HepG2 (cell line): ENCODE measurements at regions of chr11 and their contacts with region 1.

Region 1: GRCh38 chr11:102495161-102496042 is 35.1 kb downstream of the MMP7 start:
- DNase-seq: peak; percentile 86
- ATAC-seq: peak; percentile 81
- H3K4me3 ChIP-seq: peak overlapping the region in 2 of 3 experiments; percentile 6 to 38; a peak in 3 of 6 replicates
- H3K27ac ChIP-seq: peak overlapping the region; percentile 39
- H3K4me1 ChIP-seq: peaks cover 56% of the 10 kb centered on the region
- H3K27me3 ChIP-seq: no peaks in the 10 kb centered on the region
- CTCF ChIP-seq: peak; percentile 82
- EP300 ChIP-seq: no peak
- POLR2A ChIP-seq: no peak
- RAD21 ChIP-seq: peak; percentile 86

Region 2: GRCh38 chr11:102341844-102342318 is 153.5 kb before region 1 on chr11:
- CTCF ChIA-PET with region 1: interaction called, 19 read pairs
- POLR2A ChIA-PET with region 1: interaction called, 3 read pairs
- in situ Hi-C with region 1: loop called (anchors 10 kb)
- intact Hi-C with region 1: loop called (anchors 1 kb)
- DNase-seq: peak; percentile 78
- ATAC-seq: peak; percentile 86
- H3K4me3 ChIP-seq: no peak overlapping the region
- H3K27ac ChIP-seq: no peak overlapping the region
- H3K4me1 ChIP-seq: peaks cover 30% of the 10 kb centered on the region
- H3K27me3 ChIP-seq: no peaks in the 10 kb centered on the region; a peak in 1 of 5 replicates
- CTCF ChIP-seq: peak; percentile 92
- EP300 ChIP-seq: no peak
- POLR2A ChIP-seq: no peak
- RAD21 ChIP-seq: peak; percentile 65

Region 3: DNA sequence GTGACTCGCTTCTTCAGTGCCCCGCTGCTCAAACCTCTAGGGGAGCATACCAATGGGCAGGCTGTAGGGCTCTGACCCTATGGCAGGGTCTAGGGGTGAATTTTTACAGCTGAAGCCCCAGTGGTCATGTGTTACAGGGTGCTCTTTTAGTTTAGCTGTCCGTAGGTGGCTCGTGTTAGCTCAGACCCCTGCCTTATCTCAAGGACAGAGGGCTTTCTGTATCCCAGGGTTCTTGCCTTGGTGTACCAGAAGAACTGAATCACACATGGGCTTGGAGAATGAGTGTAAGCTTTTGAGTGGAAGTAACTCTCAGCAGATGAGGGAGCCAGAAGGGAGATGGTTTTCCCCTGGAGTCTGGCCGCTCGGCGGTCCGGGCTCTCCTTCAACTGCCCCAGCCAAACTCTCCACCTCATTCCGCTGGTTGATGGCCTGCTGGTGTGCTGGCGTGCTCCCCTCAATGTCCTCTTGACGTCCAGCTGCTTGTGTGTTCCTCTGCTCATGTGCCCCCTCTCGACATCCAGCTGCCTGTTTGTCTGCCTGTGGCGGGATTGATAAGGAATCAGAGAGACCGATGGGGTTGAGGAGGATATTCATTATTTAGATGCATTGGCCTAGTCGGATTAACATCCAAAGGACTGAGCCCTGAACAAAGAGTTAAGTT is 110.9 kb before region 1 on chr11:
- CTCF ChIA-PET with region 1: no interaction called
- POLR2A ChIA-PET with region 1: no interaction called
- in situ Hi-C with region 1: loop called (anchors 5 kb)
- intact Hi-C with region 1: no loop called
- DNase-seq: no peak
- ATAC-seq: no peak; the same call in 2 of the 3 replicates
- H3K4me3 ChIP-seq: no peak overlapping the region
- H3K27ac ChIP-seq: no peak overlapping the region
- H3K4me1 ChIP-seq: no peaks in the 10 kb centered on the region
- H3K27me3 ChIP-seq: no peaks in the 10 kb centered on the region
- CTCF ChIP-seq: no peak
- EP300 ChIP-seq: no peak
- POLR2A ChIP-seq: no peak
- RAD21 ChIP-seq: no peak

Region 4: GRCh38 chr11:102430158-102430836 is 65.1 kb before region 1 on chr11:
- CTCF ChIA-PET with region 1: no interaction called
- POLR2A ChIA-PET with region 1: no interaction called
- in situ Hi-C with region 1: no loop called
- intact Hi-C with region 1: loop called (anchors 2 kb)
- DNase-seq: no peak
- ATAC-seq: peak; percentile 21
- H3K4me3 ChIP-seq: no peak overlapping the region
- H3K27ac ChIP-seq: peak overlapping the region; percentile 19
- H3K4me1 ChIP-seq: peaks cover 66% of the 10 kb centered on the region
- H3K27me3 ChIP-seq: no peaks in the 10 kb centered on the region
- CTCF ChIP-seq: no peak
- EP300 ChIP-seq: no peak
- POLR2A ChIP-seq: no peak
- RAD21 ChIP-seq: no peak

Region 5: DNA sequence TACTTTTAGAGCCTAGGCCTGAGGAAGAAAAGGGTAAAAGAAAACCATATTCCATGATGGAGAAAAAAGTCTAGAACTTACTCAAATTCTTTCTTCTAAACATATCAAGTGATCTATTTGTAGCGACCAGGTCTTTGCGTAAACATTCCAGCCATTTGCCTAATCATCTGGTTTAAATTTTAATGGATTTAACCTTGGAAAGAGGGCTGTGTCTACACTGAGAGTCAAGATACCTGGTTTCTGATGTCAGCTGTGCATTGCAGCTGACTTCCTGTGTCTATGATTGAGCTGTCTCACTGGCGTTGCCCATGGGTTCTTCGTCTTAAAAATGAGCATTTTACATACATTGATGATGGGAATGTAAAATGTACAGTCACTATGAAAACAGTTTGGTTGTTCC is 32.8 kb before region 1 on chr11:
- CTCF ChIA-PET with region 1: no interaction called
- POLR2A ChIA-PET with region 1: no interaction called
- in situ Hi-C with region 1: no loop called
- intact Hi-C with region 1: loop called (anchors 1 kb)
- DNase-seq: peak; percentile 94
- ATAC-seq: peak; percentile 92
- H3K4me3 ChIP-seq: peak overlapping the region in 2 of 3 experiments; percentile 5 to 18; a peak in 2 of 6 replicates
- H3K27ac ChIP-seq: peak overlapping the region; percentile 93
- H3K4me1 ChIP-seq: peaks cover 95% of the 10 kb centered on the region
- H3K27me3 ChIP-seq: no peaks in the 10 kb centered on the region
- CTCF ChIP-seq: no peak
- EP300 ChIP-seq: peak; percentile 72 to 91; a peak in 3 of 4 replicates
- POLR2A ChIP-seq: 0 out of 4 replicates have a peak, but pooled peaks of 1 of the 2 experiments have one; percentile 18
- RAD21 ChIP-seq: no peak

Region 6: GRCh38 chr11:102614485-102614884 is 119.1 kb after region 1 on chr11:
- CTCF ChIA-PET with region 1: interaction called, 8 read pairs
- POLR2A ChIA-PET with region 1: no interaction called
- in situ Hi-C with region 1: loop called (anchors 5 kb)
- intact Hi-C with region 1: loop called (anchors 1 kb)
- DNase-seq: no peak
- ATAC-seq: no peak
- H3K4me3 ChIP-seq: no peak overlapping the region
- H3K27ac ChIP-seq: no peak overlapping the region
- H3K4me1 ChIP-seq: peaks cover 41% of the 10 kb centered on the region
- H3K27me3 ChIP-seq: no peaks in the 10 kb centered on the region
- CTCF ChIP-seq: peak; percentile 23; the same call in 1 of the 2 replicates
- EP300 ChIP-seq: no peak
- POLR2A ChIP-seq: no peak
- RAD21 ChIP-seq: no peak